Activated naive CD4-positive, alpha-beta T cell treated with anti-CD3 and anti-CD28 coated beads for 36 hours (primary cell): ENCODE measurements at regions of chr18 and their contacts with region 1.

Region 1: GRCh38 chr18:78875268-78875997 is 104.2 kb upstream of the SALL3 start:
- DNase-seq: peak; percentile 62
- H3K4me3 Mint-ChIP-seq: no peak overlapping the region
- H3K27ac Mint-ChIP-seq: no peak overlapping the region
- H3K4me1 Mint-ChIP-seq: no peaks in the 10 kb centered on the region
- H3K27me3 Mint-ChIP-seq: peaks cover 10% of the 10 kb centered on the region

Region 2: GRCh38 chr18:78780719-78781600 is 94.5 kb before region 1 on chr18:
- CTCF ChIA-PET with region 1: no interaction called
- intact Hi-C with region 1: no loop called
- DNase-seq: no peak
- H3K4me3 Mint-ChIP-seq: no peak overlapping the region
- H3K27ac Mint-ChIP-seq: no peak overlapping the region
- H3K4me1 Mint-ChIP-seq: no peaks in the 10 kb centered on the region
- H3K27me3 Mint-ChIP-seq: no peaks in the 10 kb centered on the region

Region 3: GRCh38 chr18:78998371-78999071 is 123.1 kb after region 1 on chr18:
- CTCF ChIA-PET with region 1: no interaction called
- intact Hi-C with region 1: no loop called
- DNase-seq: no peak
- H3K4me3 Mint-ChIP-seq: no peak overlapping the region
- H3K27ac Mint-ChIP-seq: no peak overlapping the region
- H3K4me1 Mint-ChIP-seq: no peaks in the 10 kb centered on the region
- H3K27me3 Mint-ChIP-seq: peaks cover 14% of the 10 kb centered on the region

Region 4: GRCh38 chr18:79133724-79134123 is 258.3 kb after region 1 on chr18:
- CTCF ChIA-PET with region 1: no interaction called
- intact Hi-C with region 1: no loop called
- DNase-seq: no peak
- H3K4me3 Mint-ChIP-seq: no peak overlapping the region
- H3K27ac Mint-ChIP-seq: no peak overlapping the region
- H3K4me1 Mint-ChIP-seq: peaks cover 6% of the 10 kb centered on the region
- H3K27me3 Mint-ChIP-seq: no peaks in the 10 kb centered on the region

Region 5: DNA sequence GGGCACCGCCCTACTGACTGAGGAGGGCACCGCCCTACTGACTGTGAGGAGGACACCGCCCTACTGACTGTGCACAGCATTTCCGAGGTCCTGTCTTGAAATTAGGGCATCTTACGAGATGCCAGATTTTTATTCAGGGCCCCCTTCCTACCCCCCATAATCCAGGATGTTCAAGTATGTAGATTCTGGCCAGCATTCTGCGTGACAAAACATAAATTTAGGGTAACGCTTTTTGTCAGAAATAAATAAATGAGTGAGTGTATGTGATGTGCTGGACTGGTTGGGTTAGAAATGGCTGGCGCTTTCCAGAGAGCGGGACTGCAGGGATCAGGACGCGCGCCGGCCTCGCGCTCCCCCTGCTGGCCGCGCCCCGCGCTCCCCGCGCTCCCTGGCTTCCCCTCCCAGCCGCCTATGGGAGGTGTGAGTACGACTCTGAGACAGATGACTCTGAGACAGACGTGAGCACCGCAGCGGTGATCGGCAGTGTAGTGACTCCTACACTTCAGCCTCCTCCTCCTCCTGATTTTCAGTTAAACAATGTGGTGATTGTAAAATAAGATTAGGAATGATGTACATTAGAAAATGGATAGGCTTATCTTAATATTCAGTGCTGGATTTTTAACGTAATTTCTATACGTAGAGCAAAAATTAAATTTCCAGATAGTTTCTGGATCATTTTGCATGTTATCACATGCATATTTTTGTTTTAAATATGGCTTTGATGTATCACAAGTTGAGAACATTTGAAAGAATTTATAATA is 371.1 kb after region 1 on chr18:
- CTCF ChIA-PET with region 1: no interaction called
- intact Hi-C with region 1: loop called (anchors 1 kb)
- DNase-seq: peak; percentile 84
- H3K4me3 Mint-ChIP-seq: no peak overlapping the region
- H3K27ac Mint-ChIP-seq: no peak overlapping the region
- H3K4me1 Mint-ChIP-seq: peaks cover 9% of the 10 kb centered on the region
- H3K27me3 Mint-ChIP-seq: no peaks in the 10 kb centered on the region

Region 6: GRCh38 chr18:79374408-79375171 is 499.2 kb after region 1 on chr18:
- CTCF ChIA-PET with region 1: no interaction called
- intact Hi-C with region 1: no loop called
- DNase-seq: no peak
- H3K4me3 Mint-ChIP-seq: no peak overlapping the region
- H3K27ac Mint-ChIP-seq: no peak overlapping the region
- H3K4me1 Mint-ChIP-seq: peaks cover 21% of the 10 kb centered on the region
- H3K27me3 Mint-ChIP-seq: no peaks in the 10 kb centered on the region

Region 7: DNA sequence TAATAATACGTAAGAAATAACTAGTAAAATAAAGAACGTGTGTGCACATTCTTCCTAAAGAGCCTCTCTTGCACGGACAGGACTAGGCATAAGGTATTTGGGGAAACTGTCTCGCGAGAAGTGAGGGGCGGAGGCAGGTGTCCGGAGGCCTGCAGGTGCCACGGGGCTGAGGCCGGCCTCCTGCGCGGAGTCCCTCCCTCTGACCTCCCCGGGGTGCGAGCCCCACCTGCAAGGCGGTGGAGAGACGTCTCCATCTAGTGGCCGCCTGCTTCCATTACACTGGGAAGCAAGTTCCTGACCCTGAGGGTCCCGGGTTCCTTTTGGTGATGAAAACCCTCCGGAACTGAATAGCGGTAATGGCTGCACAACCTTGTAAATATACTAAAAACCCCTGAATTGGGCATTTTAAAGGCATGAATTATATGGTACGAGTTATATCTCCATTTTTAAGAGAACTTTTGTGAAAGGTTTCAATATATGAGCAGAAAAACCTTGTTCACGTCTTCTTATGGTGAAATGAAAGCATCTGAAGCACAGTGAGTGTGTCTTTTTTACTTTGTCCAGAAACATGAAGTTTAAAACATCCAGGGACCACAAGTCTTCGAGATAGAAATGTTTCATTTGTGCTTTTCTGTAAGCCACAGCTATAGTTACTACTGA is 768.7 kb after region 1 on chr18:
- CTCF ChIA-PET with region 1: no interaction called
- intact Hi-C with region 1: loop called (anchors 10 kb)
- DNase-seq: peak; percentile 78
- H3K4me3 Mint-ChIP-seq: no peak overlapping the region
- H3K27ac Mint-ChIP-seq: no peak overlapping the region
- H3K4me1 Mint-ChIP-seq: peaks cover 4% of the 10 kb centered on the region
- H3K27me3 Mint-ChIP-seq: peaks cover 9% of the 10 kb centered on the region